ENCODE measurements at regions of chr15 and their contacts with region 1.

Region 1: GRCh38 chr15:56918046-56918938 is at the start of gene TCF12:
- DNase-seq: peak; percentile 70
- H3K4me3 ChIP-seq: peak within 1 kb of the TSS; percentile 83
- CTCF ChIP-seq: peak; percentile 67

Region 2: DNA sequence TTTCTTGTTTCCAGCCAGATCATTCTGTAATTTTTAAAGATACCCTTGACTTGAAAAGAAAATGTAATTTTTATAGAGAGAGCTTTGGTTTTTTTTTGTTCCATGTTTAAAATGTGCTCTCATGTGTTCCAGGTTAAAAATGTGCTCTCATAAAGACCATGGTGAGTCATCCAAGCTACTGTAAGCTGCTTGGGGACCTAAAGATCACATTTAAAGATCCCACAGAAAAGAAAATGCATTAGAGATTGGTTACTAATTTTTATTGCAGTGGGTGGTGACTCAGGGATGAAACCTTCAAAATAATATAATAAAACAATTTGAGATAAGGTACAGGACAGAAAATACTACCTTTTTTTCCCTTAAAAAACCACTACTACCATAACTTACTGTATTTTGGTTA is 11.1 kb after region 1 on chr15:
- CTCF ChIA-PET with region 1: interaction called, 14 read pairs
- POLR2A ChIA-PET with region 1: interaction called, 3 read pairs
- DNase-seq: no peak
- H3K4me3 ChIP-seq: no peak overlapping the region
- CTCF ChIP-seq: no peak

Region 3: DNA sequence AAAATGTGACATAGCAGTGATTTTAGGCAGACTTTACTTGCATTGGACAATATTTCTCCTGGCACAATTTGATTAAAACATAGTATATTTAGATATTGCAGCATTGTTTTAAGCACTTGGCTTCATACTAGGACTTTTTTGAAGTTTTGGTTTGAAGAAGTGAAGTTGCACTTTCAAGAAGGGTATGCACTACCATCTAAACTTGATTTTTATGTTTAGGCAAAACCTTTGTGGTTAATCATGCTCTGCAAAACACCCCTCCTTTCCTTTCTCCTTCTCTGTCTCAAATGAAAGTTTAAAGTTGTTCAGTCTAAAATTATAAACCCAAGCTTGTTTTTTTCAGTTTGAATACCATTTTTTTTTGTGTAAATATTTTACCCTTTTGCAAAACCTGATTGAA is 174.0 kb after region 1 on chr15:
- CTCF ChIA-PET with region 1: no interaction called
- POLR2A ChIA-PET with region 1: no interaction called
- DNase-seq: no peak
- H3K4me3 ChIP-seq: no peak overlapping the region
- CTCF ChIP-seq: no peak

Region 4: DNA sequence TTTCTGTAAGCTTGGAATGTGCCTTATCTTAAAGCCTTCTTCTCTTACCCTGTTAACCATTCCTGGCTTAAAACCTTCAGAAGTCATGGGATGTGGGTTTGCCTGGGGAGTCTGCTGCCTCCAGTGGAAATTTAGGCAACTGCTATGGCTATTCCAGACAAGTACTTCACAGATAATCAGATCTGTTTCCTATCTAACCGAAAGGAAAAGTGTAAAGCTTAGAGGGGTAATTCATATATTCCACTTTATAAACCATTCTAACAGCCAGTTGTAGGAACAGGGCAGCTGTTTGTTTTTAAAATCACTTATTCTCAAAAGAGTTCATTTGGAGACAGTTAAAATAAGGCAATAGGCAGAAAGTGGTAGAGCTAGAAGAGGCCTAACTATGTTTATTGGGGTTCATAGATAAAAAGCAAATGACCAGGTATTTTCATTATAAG is 220.1 kb after region 1 on chr15:
- CTCF ChIA-PET with region 1: interaction called, 12 read pairs
- POLR2A ChIA-PET with region 1: no interaction called
- DNase-seq: no peak
- H3K4me3 ChIP-seq: no peak overlapping the region
- CTCF ChIP-seq: peak; percentile 68

Measured in AG04449 (cell line).